Heart left ventricle (tissue), 16 donors: ENCODE measurements at regions of chr21 and their contacts with region 1.

Region 1: DNA sequence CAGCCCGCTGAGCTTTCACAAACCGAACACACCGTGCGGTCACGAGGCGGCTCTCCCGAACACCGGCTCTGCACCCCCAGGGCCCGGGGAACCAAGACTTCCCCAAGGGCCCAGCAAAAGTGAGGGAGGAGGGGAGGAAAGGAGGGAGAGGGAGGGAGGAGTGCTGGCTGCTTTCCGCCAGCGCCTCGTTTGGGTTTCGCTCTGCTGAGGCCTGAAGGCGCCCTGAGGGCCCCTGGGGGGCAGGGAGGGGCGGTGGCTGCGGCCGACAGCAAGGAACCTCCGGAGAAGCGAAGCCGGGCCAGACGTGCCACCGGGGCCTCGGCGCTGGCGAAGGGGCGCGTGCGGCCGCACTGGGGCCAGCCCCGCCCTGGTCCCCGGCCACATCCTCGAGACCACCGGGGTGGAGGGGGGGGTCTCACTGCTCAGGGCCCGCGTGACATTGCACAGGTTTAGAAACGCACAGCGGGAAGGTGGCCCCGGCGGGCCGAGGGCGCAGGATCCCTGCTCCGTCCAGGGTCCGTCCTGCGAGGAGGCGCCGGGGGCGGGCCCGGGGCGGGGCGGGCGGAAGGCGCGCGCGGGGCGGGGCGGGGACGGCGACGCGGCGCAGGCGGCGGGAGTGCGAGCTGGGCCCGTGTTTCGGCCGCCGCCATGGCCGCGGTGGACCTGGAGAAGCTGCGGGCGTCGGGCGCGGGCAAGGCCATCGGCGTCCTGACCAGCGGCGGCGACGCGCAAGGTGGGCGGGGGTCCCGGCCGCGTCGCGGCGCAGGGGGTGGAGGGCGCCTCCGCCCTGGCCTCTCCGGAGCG is at the start of gene PFKL:
- DNase-seq: peak; percentile 72 to 85 (median 76)
- ATAC-seq: peak in 3 of 4 donors; percentile 36 to 72 (median 71)
- H3K4me3 ChIP-seq: peak within 1 kb of the TSS; percentile 61 to 96 (median 83)
- H3K27ac ChIP-seq: peak within 1 kb of the TSS; percentile 80 to 97 (median 92)
- H3K4me1 ChIP-seq: peaks cover 9 to 67% (median 58%) of the 10 kb centered on the region in 12 donors
- H3K27me3 ChIP-seq: no peaks in the 10 kb centered on the region
- CTCF ChIP-seq: no peak
- POLR2A ChIP-seq: peak in 1 of 2 donors; percentile 34
- total RNA-seq, gene PFKL: 36.9 to 85.1 (median 46.1) TPM

Region 2: DNA sequence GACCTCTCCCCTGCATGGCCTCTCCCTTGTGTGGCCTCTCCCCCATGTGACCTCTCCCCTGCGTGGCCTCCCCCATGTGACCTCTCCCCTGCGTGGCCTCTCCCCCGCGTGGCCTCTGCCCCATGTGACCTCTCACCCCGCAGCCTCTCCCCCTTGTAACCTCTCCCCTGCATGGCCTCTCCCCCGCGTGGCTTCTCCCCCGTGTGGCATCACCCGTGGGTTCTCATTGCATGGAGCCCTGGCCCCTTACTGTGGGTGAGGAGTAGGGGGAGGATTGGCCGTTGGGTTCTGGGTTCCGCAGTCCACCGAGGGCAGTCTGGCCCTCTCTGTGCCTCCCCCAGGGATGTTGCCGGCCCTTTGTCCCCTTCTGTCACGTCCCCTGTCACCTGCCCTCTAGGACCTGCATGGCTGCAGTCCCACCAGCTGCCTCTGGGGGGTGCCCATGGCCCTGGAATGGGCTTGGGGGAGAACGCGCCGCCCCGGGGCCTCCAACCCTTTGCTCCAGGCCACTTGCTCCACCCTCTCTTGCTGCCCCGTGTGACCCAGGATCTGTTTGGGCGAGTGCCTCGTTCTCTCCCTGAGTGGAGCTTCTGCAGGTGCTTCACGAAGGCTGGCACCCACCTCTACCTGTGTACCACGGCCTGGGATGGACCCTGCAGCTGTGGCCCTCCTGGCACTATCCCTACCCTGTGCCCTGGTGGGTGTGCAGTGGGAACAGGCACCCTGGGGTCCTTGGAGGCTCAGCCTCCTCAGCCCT is 489.0 kb before region 1 on chr21:
- intact Hi-C with region 1: loop called in 1 of 10 experiments (anchors 10 kb)
- DNase-seq: peak; percentile 83 to 93 (median 86)
- ATAC-seq: peak; percentile 68 to 88 (median 84)
- H3K4me3 ChIP-seq: peak overlapping the region in 3 of 12 donors; percentile 3 to 52 (median 15)
- H3K27ac ChIP-seq: no peak overlapping the region
- H3K4me1 ChIP-seq: peaks cover 0 to 25% (median 8%) of the 10 kb centered on the region in 12 donors
- H3K27me3 ChIP-seq: no peaks in the 10 kb centered on the region
- CTCF ChIP-seq: peak; percentile 88 to 97 (median 92)
- POLR2A ChIP-seq: no peak

Region 3: GRCh38 chr21:44051462-44051941 is 248.2 kb before region 1 on chr21:
- intact Hi-C with region 1: loop called in 1 of 10 experiments (anchors 10 kb)
- DNase-seq: peak; percentile 32 to 79 (median 70)
- ATAC-seq: peak; percentile 20 to 86 (median 74)
- H3K4me3 ChIP-seq: peak overlapping the region in 1 of 12 donors; percentile 5
- H3K27ac ChIP-seq: peak overlapping the region; percentile 12 to 85 (median 50)
- H3K4me1 ChIP-seq: peaks cover 0 to 42% (median 26%) of the 10 kb centered on the region in 12 donors
- H3K27me3 ChIP-seq: no peaks in the 10 kb centered on the region
- CTCF ChIP-seq: no peak
- POLR2A ChIP-seq: no peak

Region 4: GRCh38 chr21:44482581-44483287 is 183.1 kb after region 1 on chr21:
- intact Hi-C with region 1: loop called in 1 of 10 experiments (anchors 5 kb)
- DNase-seq: no peak
- ATAC-seq: no peak
- H3K4me3 ChIP-seq: no peak overlapping the region
- H3K27ac ChIP-seq: no peak overlapping the region
- H3K4me1 ChIP-seq: peaks cover 0 to 14% (median 3%) of the 10 kb centered on the region in 12 donors
- H3K27me3 ChIP-seq: peaks cover 0 to 20% (median 0%) of the 10 kb centered on the region in 9 donors
- CTCF ChIP-seq: no peak
- POLR2A ChIP-seq: no peak